GM10248 (cell line): ENCODE measurements at regions of chr3 and their contacts with region 1.

Region 1: DNA sequence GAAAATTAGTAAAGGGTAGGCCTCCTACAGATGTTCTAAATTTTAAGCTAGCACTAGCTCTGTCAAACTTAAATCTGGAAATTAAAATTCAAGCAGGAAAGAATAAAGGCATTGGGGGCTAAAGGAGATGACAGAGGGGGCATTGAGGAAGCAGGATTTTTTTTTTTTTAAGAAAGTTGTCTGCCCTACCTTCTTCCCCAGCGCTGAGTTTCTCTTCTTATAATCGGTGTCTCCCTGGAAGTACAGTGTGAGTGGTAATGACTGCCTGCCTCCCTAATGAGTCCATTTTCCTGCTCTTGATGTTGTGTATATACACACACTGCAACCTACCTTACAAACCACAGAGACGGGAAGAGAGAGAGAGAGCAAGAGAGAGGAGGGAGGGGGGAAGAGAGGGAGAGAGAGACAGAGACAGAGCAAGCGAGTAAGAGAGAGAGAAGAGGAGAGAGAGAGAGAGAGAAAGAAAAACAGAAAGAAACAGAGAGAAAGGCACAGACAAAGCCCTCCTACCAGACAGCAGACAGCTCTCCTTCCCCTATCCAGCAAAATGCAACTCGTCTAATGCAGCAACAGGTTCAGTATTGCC is 47.0 kb downstream of the ZBTB20 start:
- DNase-seq: no peak
- CTCF ChIP-seq: no peak

Region 2: GRCh38 chr3:115111632-115112031 is 11.6 kb after region 1 on chr3:
- CTCF ChIA-PET with region 1: interaction called, 11 read pairs
- POLR2A ChIA-PET with region 1: no interaction called
- DNase-seq: no peak
- CTCF ChIP-seq: no peak